Activated CD4-positive, alpha-beta memory T cell treated with anti-CD3 and anti-CD28 coated beads for 36 hours (primary cell): ENCODE measurements at regions of chr5 and their contacts with region 1.

Region 1: DNA sequence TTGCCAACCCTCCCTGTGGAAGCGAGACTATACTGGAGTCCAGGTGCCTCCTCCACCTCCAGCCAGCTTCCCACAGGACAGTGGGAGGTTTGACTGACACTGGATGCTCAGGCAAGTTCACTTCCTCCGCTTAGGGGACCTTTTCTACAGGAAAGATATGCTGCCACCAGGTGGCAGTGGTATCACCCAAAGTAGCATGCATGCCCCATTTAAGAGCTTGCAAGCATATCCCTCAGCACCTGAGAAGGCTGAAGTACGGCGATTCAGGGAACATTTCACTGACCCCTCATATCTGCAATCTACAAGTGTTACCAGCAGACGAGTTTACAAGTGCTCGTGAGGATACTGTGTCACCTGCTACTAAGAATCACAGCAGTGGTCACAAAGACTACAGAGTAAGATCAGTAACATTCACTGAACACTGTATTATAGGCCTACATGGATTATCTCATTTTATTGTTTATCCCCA is 75.5 kb downstream of the KLHL3 start:
- DNase-seq: peak; percentile 82
- H3K4me3 Mint-ChIP-seq: no peak overlapping the region
- H3K27ac Mint-ChIP-seq: no peak overlapping the region
- H3K4me1 Mint-ChIP-seq: peaks cover 8% of the 10 kb centered on the region
- H3K27me3 Mint-ChIP-seq: no peaks in the 10 kb centered on the region

Region 2: DNA sequence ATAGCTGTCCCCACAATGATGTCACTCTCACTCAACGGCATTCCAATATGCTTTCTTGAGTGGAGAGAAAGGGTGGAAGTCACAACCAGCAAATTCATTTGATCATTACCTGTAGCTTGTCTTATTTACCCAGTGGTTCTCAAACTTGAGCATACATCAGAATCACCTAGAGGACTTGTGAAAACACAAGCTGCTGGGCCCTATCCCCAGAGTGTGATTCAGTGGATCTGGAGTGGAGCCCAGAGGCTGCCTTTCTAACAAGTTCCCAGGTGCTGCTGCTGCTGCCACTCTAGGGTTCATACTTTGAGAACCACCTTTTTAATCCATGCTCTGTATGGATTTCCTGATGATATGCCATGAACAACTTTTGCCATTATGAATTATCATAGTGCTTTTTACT is 19.2 kb before region 1 on chr5:
- CTCF ChIA-PET with region 1: interaction called, 10 read pairs
- POLR2A ChIA-PET with region 1: no interaction called
- intact Hi-C with region 1: no loop called
- DNase-seq: no peak
- H3K4me3 Mint-ChIP-seq: no peak overlapping the region
- H3K27ac Mint-ChIP-seq: no peak overlapping the region
- H3K4me1 Mint-ChIP-seq: no peaks in the 10 kb centered on the region
- H3K27me3 Mint-ChIP-seq: no peaks in the 10 kb centered on the region

Region 3: DNA sequence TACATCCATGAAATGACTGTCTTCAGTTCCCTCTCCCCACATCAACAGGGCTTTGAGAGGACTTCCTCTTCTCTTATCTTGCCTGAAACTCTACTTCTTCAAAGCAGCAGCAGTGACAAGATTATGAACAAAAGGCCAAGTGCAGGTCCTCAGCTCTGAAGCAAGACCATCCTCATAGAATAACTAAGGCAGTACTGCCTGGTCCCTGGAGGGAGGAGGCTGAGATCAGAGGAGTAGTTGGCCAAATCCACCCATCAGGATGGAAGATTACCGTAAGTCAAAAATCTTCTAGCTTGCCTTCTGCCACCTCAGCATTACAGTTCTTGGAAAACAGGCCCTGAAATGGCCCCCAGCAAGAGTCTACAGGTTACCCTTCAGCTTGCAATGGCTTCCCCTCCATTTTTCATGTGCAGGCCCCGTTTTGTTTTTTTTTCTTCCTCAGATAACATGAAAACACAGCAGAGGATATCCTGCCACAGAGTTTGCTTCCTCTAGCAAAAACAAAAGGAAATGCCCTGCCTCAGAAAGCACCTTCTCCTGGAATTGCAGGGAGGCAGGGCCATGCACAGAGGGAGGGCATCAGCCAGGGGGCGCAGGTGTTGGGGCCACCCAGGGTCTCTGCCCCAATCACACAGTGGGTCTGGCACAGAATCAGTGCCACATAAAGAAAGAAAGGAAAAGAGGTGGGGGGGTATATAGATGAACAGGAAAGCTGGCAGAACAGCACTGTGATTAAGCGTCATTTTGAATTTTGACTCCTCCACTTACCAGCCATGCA is 35.5 kb after region 1 on chr5:
- CTCF ChIA-PET with region 1: interaction called, 29 read pairs
- POLR2A ChIA-PET with region 1: no interaction called
- intact Hi-C with region 1: no loop called
- DNase-seq: peak; percentile 29
- H3K4me3 Mint-ChIP-seq: peak overlapping the region; percentile 42
- H3K27ac Mint-ChIP-seq: peak overlapping the region; percentile 86
- H3K4me1 Mint-ChIP-seq: peaks cover 41% of the 10 kb centered on the region
- H3K27me3 Mint-ChIP-seq: no peaks in the 10 kb centered on the region

Region 4: DNA sequence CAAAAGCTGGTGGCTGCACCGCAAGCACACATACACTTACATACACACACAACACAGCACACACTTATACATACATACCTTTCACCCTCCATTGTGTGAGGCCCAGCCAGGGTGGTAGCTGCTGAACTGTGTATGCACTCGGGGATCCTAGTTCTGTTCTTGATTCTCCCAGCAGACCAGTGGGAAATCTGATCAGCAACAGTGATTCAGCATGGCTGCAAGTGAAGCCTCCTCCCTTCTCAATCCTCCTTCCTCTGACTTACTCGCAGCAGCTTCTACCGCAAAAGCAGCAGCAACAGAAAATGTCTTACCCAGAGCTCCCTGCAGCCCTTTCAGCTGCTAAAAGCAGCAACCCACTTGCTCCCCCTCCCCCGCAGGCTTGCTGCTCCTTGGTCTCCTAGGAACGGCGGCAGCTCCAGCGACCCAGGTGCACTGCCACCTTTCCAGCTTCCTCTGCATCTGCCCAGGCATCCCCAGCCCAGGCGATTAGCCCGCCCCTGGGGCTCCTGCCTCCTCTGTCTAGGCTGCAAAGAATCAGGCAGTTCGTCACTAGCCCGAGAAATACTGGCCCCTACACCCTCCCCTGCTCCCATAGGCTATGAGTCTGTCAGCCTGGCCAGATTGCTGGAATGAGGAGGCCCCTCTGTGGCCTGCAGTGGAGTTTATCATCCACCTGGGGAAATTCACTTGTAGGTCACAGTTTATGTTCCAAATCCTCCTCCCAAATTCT is 75.3 kb after region 1 on chr5 and contains the start of gene KLHL3:
- CTCF ChIA-PET with region 1: interaction called, 369 read pairs
- POLR2A ChIA-PET with region 1: interaction called, 5 read pairs
- intact Hi-C with region 1: no loop called
- DNase-seq: peak; percentile 50
- H3K4me3 Mint-ChIP-seq: no peak within 1 kb of the TSS
- H3K27ac Mint-ChIP-seq: no peak within 1 kb of the TSS
- H3K4me1 Mint-ChIP-seq: peaks cover 31% of the 10 kb centered on the region
- H3K27me3 Mint-ChIP-seq: no peaks in the 10 kb centered on the region
- total RNA-seq, gene KLHL3: 3.0 to 3.4 TPM